ENCODE measurements at regions of chr13 and their contacts with region 1.

Region 1: DNA sequence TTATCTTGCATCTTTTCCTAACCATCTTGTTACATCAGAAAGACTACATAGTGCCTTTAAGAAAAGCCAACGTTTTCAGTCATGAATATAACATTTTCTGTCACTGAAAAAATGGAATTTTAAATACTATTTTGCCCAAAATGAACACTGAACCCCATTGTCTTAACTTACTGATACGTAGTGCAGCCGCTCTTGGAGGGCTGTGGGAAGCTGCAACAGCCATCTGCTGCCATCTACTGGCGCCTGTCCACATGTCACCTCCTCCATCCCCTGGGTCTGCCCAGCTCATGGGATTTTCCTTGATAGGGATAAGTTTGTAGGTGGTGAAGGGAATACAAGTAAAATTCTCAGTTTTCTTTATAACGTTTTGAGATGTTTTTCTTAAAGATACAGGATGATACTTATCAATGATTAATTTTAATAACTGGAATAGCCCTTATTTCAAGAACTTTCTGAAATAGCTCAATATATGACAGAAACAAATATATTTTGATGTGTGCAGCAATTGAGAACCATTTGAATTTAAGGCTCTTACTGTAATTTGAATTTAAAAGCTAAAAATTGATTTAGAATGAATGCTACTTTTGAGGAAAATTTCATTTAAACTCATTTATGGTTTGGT is 73.7 kb downstream of the GGACT start:
- DNase-seq: peak; percentile 75
- ATAC-seq: peak; percentile 95
- H3K4me3 ChIP-seq: no peak overlapping the region
- H3K27ac ChIP-seq: no peak overlapping the region
- H3K4me1 ChIP-seq: no peaks in the 10 kb centered on the region; the same call in 1 of the 2 replicates
- H3K27me3 ChIP-seq: no peaks in the 10 kb centered on the region
- CTCF ChIP-seq: peak; percentile 93
- POLR2A ChIP-seq: peak; percentile 41; the same call in 1 of the 2 replicates
- RAD21 ChIP-seq: peak; percentile 98

Region 2: DNA sequence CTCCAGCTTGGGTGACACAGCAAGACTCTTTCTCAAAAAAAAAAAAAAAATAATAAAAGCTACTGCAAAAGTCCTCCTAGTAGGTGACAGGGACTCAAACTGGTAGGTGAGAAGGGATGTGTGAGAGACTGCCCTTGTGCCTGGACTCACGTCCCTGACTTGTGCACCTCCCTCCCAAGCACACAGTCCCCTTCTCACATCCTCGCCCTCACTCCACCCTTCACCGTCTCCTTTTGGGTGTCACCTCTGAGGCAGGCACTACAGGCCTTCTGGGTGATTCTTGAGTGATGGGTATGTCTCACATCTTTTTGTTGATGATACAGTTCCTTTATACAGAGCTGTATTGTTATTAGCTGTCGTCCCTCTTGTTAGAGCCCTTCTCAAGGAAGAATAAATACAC is 843.2 kb before region 1 on chr13:
- CTCF ChIA-PET with region 1: no interaction called
- POLR2A ChIA-PET with region 1: no interaction called
- dilution Hi-C with region 1: no loop called
- in situ Hi-C with region 1: no loop called
- intact Hi-C with region 1: loop called (anchors 5 kb)
- DNase-seq: no peak
- ATAC-seq: no peak
- H3K4me3 ChIP-seq: no peak overlapping the region
- H3K27ac ChIP-seq: no peak overlapping the region
- H3K4me1 ChIP-seq: no peaks in the 10 kb centered on the region
- H3K27me3 ChIP-seq: peaks cover 2% of the 10 kb centered on the region; the same call in 1 of the 2 replicates
- CTCF ChIP-seq: no peak
- POLR2A ChIP-seq: no peak
- RAD21 ChIP-seq: no peak

Region 3: GRCh38 chr13:99969919-99970621 is 544.8 kb before region 1 on chr13:
- CTCF ChIA-PET with region 1: no interaction called
- POLR2A ChIA-PET with region 1: no interaction called
- dilution Hi-C with region 1: no loop called
- in situ Hi-C with region 1: no loop called
- intact Hi-C with region 1: loop called (anchors 10 kb)
- DNase-seq: no peak
- ATAC-seq: peak; percentile 23; the same call in 1 of the 2 replicates
- H3K4me3 ChIP-seq: no peak overlapping the region
- H3K27ac ChIP-seq: no peak overlapping the region
- H3K4me1 ChIP-seq: peaks cover 2% of the 10 kb centered on the region; the same call in 1 of the 2 replicates
- H3K27me3 ChIP-seq: peaks cover 94% of the 10 kb centered on the region
- CTCF ChIP-seq: no peak
- POLR2A ChIP-seq: no peak
- RAD21 ChIP-seq: no peak

Region 4: DNA sequence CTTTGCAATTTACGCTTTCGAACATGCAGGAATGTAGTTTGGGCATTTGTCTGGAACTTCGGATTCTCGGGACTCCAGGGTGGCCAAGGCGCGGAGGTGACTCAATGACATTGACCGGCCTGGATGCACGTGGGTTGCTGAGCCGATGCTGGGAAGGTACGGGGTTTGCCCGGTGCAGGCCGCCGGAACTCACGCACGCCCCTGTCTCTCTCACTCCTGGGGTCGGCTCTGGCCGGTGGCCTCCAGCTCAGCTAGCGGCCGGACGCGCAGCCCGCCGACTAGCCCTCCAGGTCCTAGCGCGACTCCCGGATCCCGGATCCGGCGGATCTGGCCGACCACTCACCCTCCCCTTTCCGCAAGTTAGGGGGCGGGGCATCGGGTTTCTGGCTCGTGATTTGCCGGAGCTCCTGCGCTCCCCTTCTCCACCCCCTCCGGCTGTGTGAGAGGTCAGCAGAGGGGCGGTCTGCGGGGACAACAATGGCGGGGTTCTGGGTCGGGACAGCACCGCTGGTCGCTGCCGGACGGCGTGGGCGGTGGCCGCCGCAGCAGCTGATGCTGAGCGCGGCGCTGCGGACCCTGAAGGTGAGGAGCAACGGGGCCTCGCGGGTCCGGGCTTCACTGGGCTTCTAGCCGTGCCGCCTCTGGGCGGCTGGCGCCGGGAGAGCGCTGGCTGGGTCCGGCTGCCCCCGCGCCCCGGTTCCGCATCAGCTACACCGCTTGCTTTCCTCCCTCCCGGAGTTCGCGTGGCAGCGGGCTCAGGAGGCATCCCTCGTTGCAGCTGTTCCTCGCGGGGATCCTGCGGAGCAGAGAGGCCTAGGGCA is 426.0 kb before region 1 on chr13 and contains the start of gene PCCA:
- CTCF ChIA-PET with region 1: no interaction called
- POLR2A ChIA-PET with region 1: no interaction called
- dilution Hi-C with region 1: no loop called
- in situ Hi-C with region 1: no loop called
- intact Hi-C with region 1: loop called (anchors 1 kb)
- DNase-seq: peak; percentile 89
- ATAC-seq: peak; percentile 98
- H3K4me3 ChIP-seq: peak within 1 kb of the TSS; percentile 75
- H3K27ac ChIP-seq: peak within 1 kb of the TSS; percentile 87
- H3K4me1 ChIP-seq: peaks cover 2% of the 10 kb centered on the region
- H3K27me3 ChIP-seq: no peaks in the 10 kb centered on the region
- CTCF ChIP-seq: no peak
- POLR2A ChIP-seq: no peak
- RAD21 ChIP-seq: 0 out of 2 replicates have a peak, but pooled peaks have one; percentile 6
- total RNA-seq, gene PCCA: 22.8 and 24.0 TPM in 2 replicates

Region 5: GRCh38 chr13:100235311-100235901 is 279.5 kb before region 1 on chr13:
- CTCF ChIA-PET with region 1: interaction called, 6 read pairs
- POLR2A ChIA-PET with region 1: no interaction called
- dilution Hi-C with region 1: no loop called
- in situ Hi-C with region 1: no loop called
- intact Hi-C with region 1: loop called (anchors 2 kb)
- DNase-seq: peak; percentile 63
- ATAC-seq: 0 out of 2 replicates have a peak, but pooled peaks have one; percentile 42
- H3K4me3 ChIP-seq: no peak overlapping the region
- H3K27ac ChIP-seq: no peak overlapping the region
- H3K4me1 ChIP-seq: peaks cover 4% of the 10 kb centered on the region
- H3K27me3 ChIP-seq: no peaks in the 10 kb centered on the region
- CTCF ChIP-seq: peak; percentile 75
- POLR2A ChIP-seq: no peak
- RAD21 ChIP-seq: peak; percentile 80

Region 6: GRCh38 chr13:100680131-100680530 is 165.2 kb after region 1 on chr13:
- CTCF ChIA-PET with region 1: no interaction called
- POLR2A ChIA-PET with region 1: no interaction called
- dilution Hi-C with region 1: no loop called
- in situ Hi-C with region 1: no loop called
- intact Hi-C with region 1: no loop called
- DNase-seq: no peak
- ATAC-seq: no peak
- H3K4me3 ChIP-seq: no peak overlapping the region
- H3K27ac ChIP-seq: no peak overlapping the region
- H3K4me1 ChIP-seq: no peaks in the 10 kb centered on the region
- H3K27me3 ChIP-seq: peaks cover 2% of the 10 kb centered on the region
- CTCF ChIP-seq: no peak
- POLR2A ChIP-seq: no peak
- RAD21 ChIP-seq: no peak

Measured in IMR-90 (cell line).